CD4-positive, alpha-beta T cell (primary cell): ENCODE measurements at regions of chr20 and their contacts with region 1.

Region 1: DNA sequence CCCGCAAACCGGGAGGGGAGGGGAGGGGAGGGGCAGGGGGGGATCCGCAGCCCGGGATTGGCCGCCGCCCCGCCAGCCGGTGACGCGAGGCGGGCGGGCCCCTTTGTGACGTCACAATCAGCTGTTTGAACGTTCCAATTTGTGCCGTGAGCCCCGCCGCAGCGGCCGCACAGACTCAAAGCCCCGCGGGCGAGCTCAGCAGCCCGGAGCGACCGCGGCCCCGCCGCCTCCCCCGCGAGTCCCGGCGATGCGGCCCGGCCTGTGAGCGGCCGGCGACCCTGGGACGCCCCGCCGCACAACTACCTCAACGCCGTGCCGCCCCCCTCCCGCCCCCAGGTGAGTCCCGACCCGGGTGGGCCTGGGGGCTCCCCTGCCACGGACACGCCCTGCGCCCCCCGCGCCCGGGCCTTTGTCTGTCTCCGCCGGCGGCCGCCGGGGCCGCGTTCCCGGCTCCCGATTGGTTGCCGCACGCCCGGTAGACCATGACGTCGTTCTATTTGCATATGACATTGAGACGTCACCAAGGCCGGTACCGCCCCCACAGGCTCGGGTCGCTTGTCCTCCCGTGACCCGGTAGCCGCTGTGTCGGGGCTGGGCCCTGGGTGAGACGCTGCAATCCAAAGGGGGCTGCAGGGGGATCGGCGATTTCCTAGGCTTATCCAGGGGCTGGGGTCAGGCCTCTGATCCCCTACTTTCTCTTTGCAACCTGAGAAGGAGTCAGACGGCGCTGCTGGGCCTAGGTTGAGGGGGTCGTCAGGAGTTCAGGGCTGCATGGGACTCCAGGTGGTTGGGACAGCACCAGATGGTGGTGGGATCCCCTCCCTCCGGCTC is at the start of gene TP53INP2:
- DNase-seq: peak; percentile 67 to 96 (median 84)
- ATAC-seq: peak; percentile 58
- H3K4me3 ChIP-seq: peak within 1 kb of the TSS; percentile 94
- H3K4me3 Mint-ChIP-seq: peak within 1 kb of the TSS; percentile 97
- H3K27ac ChIP-seq: peak within 1 kb of the TSS; percentile 59 to 69
- H3K27ac Mint-ChIP-seq: peak within 1 kb of the TSS; percentile 94
- H3K4me1 ChIP-seq: peaks cover 30% of the 10 kb centered on the region
- H3K4me1 Mint-ChIP-seq: peaks cover 36% of the 10 kb centered on the region
- H3K27me3 ChIP-seq: no peaks in the 10 kb centered on the region
- H3K27me3 Mint-ChIP-seq: peaks cover 13% of the 10 kb centered on the region
- CTCF ChIP-seq: no peak
- total RNA-seq, gene TP53INP2: 65.8 to 72.7 TPM

Region 2: GRCh38 chr20:34516247-34517113 is 187.9 kb before region 1 on chr20 and contains the start of gene DYNLRB1:
- CTCF ChIA-PET with region 1: interaction called, 7 read pairs
- POLR2A ChIA-PET with region 1: interaction called, 13 read pairs
- intact Hi-C with region 1: loop called in 1 of 2 experiments (anchors 5 kb)
- DNase-seq: peak; percentile 88 to 96 (median 94)
- ATAC-seq: peak; percentile 74
- H3K4me3 ChIP-seq: peak within 1 kb of the TSS; percentile 82
- H3K4me3 Mint-ChIP-seq: peak within 1 kb of the TSS; percentile 99
- H3K27ac ChIP-seq: peak within 1 kb of the TSS; percentile 60 to 80
- H3K27ac Mint-ChIP-seq: peak within 1 kb of the TSS; percentile 94
- H3K4me1 ChIP-seq: peaks cover 30% of the 10 kb centered on the region
- H3K4me1 Mint-ChIP-seq: peaks cover 70% of the 10 kb centered on the region
- H3K27me3 ChIP-seq: no peaks in the 10 kb centered on the region
- H3K27me3 Mint-ChIP-seq: no peaks in the 10 kb centered on the region
- CTCF ChIP-seq: no peak
- total RNA-seq, gene DYNLRB1: 38.3 to 40.3 TPM

Region 3: DNA sequence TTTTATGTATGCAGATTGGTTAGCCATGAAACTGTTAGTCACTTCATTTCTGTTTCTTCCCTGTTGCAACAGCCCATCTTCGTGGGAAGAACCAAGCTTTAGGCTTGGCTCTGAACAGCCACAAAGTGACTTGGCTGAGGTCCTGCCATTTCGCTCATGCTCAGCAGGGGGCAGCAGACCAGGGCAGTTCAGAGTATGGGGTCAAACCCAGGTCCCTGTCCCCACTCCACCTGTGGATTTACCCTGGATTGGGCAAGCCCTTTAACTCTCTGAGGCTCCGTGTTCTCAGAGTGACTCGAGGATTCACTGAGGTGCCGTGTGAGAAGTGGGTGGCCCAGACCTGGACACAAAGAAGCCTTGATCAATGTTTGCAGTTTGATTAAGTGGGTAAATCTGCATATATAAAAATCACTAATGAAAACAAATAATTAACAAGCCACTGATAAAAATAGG is 165.7 kb before region 1 on chr20:
- CTCF ChIA-PET with region 1: interaction called, 4 read pairs
- POLR2A ChIA-PET with region 1: no interaction called
- intact Hi-C with region 1: loop called (anchors 1 kb)
- DNase-seq: peak in 12 of 14 experiments; percentile 26 to 71 (median 46)
- ATAC-seq: peak; percentile 48
- H3K4me3 ChIP-seq: no peak overlapping the region
- H3K4me3 Mint-ChIP-seq: no peak overlapping the region
- H3K27ac ChIP-seq: no peak overlapping the region
- H3K27ac Mint-ChIP-seq: no peak overlapping the region
- H3K4me1 ChIP-seq: peaks cover 31% of the 10 kb centered on the region
- H3K4me1 Mint-ChIP-seq: peaks cover 28% of the 10 kb centered on the region
- H3K27me3 ChIP-seq: no peaks in the 10 kb centered on the region
- H3K27me3 Mint-ChIP-seq: no peaks in the 10 kb centered on the region
- CTCF ChIP-seq: peak; percentile 73

Region 4: GRCh38 chr20:34558320-34559218 is 145.8 kb before region 1 on chr20 and contains the start of gene MAP1LC3A:
- CTCF ChIA-PET with region 1: no interaction called
- POLR2A ChIA-PET with region 1: no interaction called
- intact Hi-C with region 1: loop called (anchors 5 kb)
- DNase-seq: peak; percentile 71 to 98 (median 92)
- ATAC-seq: peak; percentile 81
- H3K4me3 ChIP-seq: peak within 1 kb of the TSS; percentile 82
- H3K4me3 Mint-ChIP-seq: peak within 1 kb of the TSS; percentile 84
- H3K27ac ChIP-seq: peak within 1 kb of the TSS; percentile 87 to 94
- H3K27ac Mint-ChIP-seq: peak within 1 kb of the TSS; percentile 90
- H3K4me1 ChIP-seq: peaks cover 11% of the 10 kb centered on the region
- H3K4me1 Mint-ChIP-seq: peaks cover 14% of the 10 kb centered on the region
- H3K27me3 ChIP-seq: no peaks in the 10 kb centered on the region
- H3K27me3 Mint-ChIP-seq: no peaks in the 10 kb centered on the region
- CTCF ChIP-seq: no peak
- total RNA-seq, gene MAP1LC3A: 17.5 to 17.7 TPM